Natural killer cell (primary cell): ENCODE measurements at regions of chr1 and their contacts with region 1.

Region 1: GRCh38 chr1:222643938-222644635 is 26.2 kb downstream of the MIA3 start:
- DNase-seq: peak; percentile 96 to 98
- ATAC-seq: peak; percentile 90 to 99 (median 96)
- H3K4me3 ChIP-seq: peak overlapping the region; percentile 72
- H3K4me3 Mint-ChIP-seq: peak overlapping the region; percentile 91
- H3K27ac ChIP-seq: peak overlapping the region; percentile 99
- H3K27ac Mint-ChIP-seq: peak overlapping the region; percentile 98
- H3K4me1 ChIP-seq: peaks cover 10% of the 10 kb centered on the region
- H3K4me1 Mint-ChIP-seq: peaks cover 25% of the 10 kb centered on the region in 2 donors
- H3K27me3 ChIP-seq: no peaks in the 10 kb centered on the region
- H3K27me3 Mint-ChIP-seq: no peaks in the 10 kb centered on the region
- CTCF ChIP-seq: no peak

Region 2: GRCh38 chr1:222557148-222557547 is 86.9 kb before region 1 on chr1:
- intact Hi-C with region 1: no loop called
- DNase-seq: no peak
- ATAC-seq: no peak
- H3K4me3 ChIP-seq: no peak overlapping the region
- H3K4me3 Mint-ChIP-seq: no peak overlapping the region
- H3K27ac ChIP-seq: no peak overlapping the region
- H3K27ac Mint-ChIP-seq: no peak overlapping the region
- H3K4me1 ChIP-seq: no peaks in the 10 kb centered on the region
- H3K4me1 Mint-ChIP-seq: no peaks in the 10 kb centered on the region
- H3K27me3 ChIP-seq: no peaks in the 10 kb centered on the region
- H3K27me3 Mint-ChIP-seq: no peaks in the 10 kb centered on the region
- CTCF ChIP-seq: no peak

Region 3: DNA sequence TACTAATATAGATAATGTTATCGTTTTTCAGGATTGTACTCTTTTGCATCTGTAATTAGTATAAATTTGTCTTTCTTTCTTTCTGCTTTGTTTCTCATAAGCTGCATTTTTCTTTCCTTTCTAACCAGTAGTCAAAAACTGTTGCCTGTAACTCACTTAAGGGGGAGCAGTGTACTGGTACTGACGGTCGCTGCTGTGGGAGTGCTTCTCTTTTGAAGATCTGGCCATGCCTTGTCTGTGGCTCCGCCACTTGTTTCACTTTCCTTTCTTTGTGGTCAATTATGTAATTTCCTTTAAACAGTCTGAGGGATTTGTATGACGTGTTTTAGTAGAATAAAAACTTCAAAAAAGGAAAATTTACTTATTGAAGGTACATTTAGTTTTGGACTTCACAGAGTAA is 10.8 kb after region 1 on chr1:
- intact Hi-C with region 1: loop called (anchors 1 kb)
- DNase-seq: peak; percentile 41 to 93
- ATAC-seq: peak; percentile 98 to 99 (median 98)
- H3K4me3 ChIP-seq: no peak overlapping the region
- H3K4me3 Mint-ChIP-seq: peak overlapping the region; percentile 58
- H3K27ac ChIP-seq: peak overlapping the region; percentile 78
- H3K27ac Mint-ChIP-seq: peak overlapping the region; percentile 91 to 96
- H3K4me1 ChIP-seq: peaks cover 2% of the 10 kb centered on the region
- H3K4me1 Mint-ChIP-seq: peaks cover 34 to 39% of the 10 kb centered on the region in 2 donors
- H3K27me3 ChIP-seq: no peaks in the 10 kb centered on the region
- H3K27me3 Mint-ChIP-seq: no peaks in the 10 kb centered on the region
- CTCF ChIP-seq: no peak

Region 4: GRCh38 chr1:222713091-222713961 is 69.2 kb after region 1 on chr1:
- intact Hi-C with region 1: loop called (anchors 1 kb)
- DNase-seq: peak; percentile 81 to 97
- ATAC-seq: peak; percentile 63 to 76 (median 68)
- H3K4me3 ChIP-seq: peak overlapping the region; percentile 83
- H3K4me3 Mint-ChIP-seq: peak overlapping the region; percentile 99
- H3K27ac ChIP-seq: peak overlapping the region; percentile 98
- H3K27ac Mint-ChIP-seq: peak overlapping the region; percentile 99
- H3K4me1 ChIP-seq: peaks cover 10% of the 10 kb centered on the region
- H3K4me1 Mint-ChIP-seq: peaks cover 59 to 61% of the 10 kb centered on the region in 2 donors
- H3K27me3 ChIP-seq: no peaks in the 10 kb centered on the region
- H3K27me3 Mint-ChIP-seq: no peaks in the 10 kb centered on the region
- CTCF ChIP-seq: no peak